ENCODE measurements at regions of chr1 and their contacts with region 1.

Region 1: GRCh38 chr1:41149570-41149969 is 92.5 kb downstream of the SCMH1 start:
- DNase-seq: no peak
- ATAC-seq: no peak
- H3K4me3 Mint-ChIP-seq: no peak overlapping the region
- H3K27ac Mint-ChIP-seq: no peak overlapping the region
- H3K4me1 Mint-ChIP-seq: no peaks in the 10 kb centered on the region
- H3K27me3 Mint-ChIP-seq: no peaks in the 10 kb centered on the region

Region 2: DNA sequence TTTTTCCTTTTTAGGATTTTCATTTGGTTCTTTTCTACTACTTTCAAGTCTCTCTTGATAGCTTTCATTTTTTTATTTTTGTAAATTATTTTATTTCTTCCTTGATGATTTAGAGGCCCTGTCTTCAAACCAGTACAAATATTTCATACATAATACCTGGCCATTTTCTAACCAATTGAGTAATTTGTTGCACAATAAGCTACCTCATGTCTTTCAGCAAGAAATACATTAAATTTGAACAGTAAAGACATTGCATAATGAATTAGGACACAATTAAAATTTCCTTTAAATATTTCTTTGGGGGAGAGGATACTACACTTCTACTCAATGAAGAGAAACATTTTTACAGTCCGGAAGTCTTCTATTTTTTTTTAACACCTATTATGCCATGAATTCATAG is 816.9 kb before region 1 on chr1:
- CTCF ChIA-PET with region 1: no interaction called
- POLR2A ChIA-PET with region 1: interaction called, 11 read pairs
- intact Hi-C with region 1: no loop called
- DNase-seq: no peak
- ATAC-seq: no peak
- H3K4me3 Mint-ChIP-seq: no peak overlapping the region
- H3K27ac Mint-ChIP-seq: no peak overlapping the region
- H3K4me1 Mint-ChIP-seq: no peaks in the 10 kb centered on the region
- H3K27me3 Mint-ChIP-seq: no peaks in the 10 kb centered on the region